ENCODE measurements at regions of chr22 and their contacts with region 1.

Region 1: GRCh38 chr22:32528984-32529982 is 54.7 kb downstream of the FBXO7 start:
- DNase-seq: peak; percentile 86
- ATAC-seq: peak; percentile 79
- H3K4me3 Mint-ChIP-seq: no peak overlapping the region
- H3K27ac Mint-ChIP-seq: no peak overlapping the region
- H3K4me1 Mint-ChIP-seq: no peaks in the 10 kb centered on the region
- H3K27me3 Mint-ChIP-seq: no peaks in the 10 kb centered on the region
- CTCF ChIP-seq: peak; percentile 63

Region 2: GRCh38 chr22:32518848-32519247 is 10.4 kb before region 1 on chr22:
- CTCF ChIA-PET with region 1: interaction called, 23 read pairs
- POLR2A ChIA-PET with region 1: no interaction called
- intact Hi-C with region 1: no loop called
- DNase-seq: peak; percentile 11
- ATAC-seq: no peak
- H3K4me3 Mint-ChIP-seq: no peak overlapping the region
- H3K27ac Mint-ChIP-seq: no peak overlapping the region
- H3K4me1 Mint-ChIP-seq: no peaks in the 10 kb centered on the region
- H3K27me3 Mint-ChIP-seq: no peaks in the 10 kb centered on the region
- CTCF ChIP-seq: peak; percentile 21

Region 3: DNA sequence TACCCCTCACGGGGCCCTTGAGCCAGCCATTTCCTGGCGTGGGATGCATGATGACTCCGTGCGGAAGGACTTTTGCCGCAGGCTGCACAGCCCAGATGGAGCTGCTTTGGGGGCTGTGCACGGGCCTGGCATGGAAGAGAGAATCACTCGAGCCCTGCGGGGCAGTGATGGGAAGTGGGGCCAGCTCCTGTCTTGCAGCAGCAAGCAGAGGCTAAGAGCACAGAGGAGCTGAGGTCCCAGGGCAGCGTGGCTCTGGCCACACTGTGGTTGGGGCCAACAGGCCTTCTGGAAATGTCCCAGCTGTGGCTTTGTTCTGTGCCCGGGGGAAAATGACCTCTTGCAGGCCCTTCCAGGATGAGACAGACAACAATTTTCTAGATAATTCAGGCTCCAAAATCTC is 179.5 kb after region 1 on chr22:
- CTCF ChIA-PET with region 1: no interaction called
- POLR2A ChIA-PET with region 1: no interaction called
- intact Hi-C with region 1: no loop called
- DNase-seq: no peak
- ATAC-seq: no peak
- H3K4me3 Mint-ChIP-seq: no peak overlapping the region
- H3K27ac Mint-ChIP-seq: no peak overlapping the region
- H3K4me1 Mint-ChIP-seq: no peaks in the 10 kb centered on the region
- H3K27me3 Mint-ChIP-seq: no peaks in the 10 kb centered on the region
- CTCF ChIP-seq: no peak

Region 4: DNA sequence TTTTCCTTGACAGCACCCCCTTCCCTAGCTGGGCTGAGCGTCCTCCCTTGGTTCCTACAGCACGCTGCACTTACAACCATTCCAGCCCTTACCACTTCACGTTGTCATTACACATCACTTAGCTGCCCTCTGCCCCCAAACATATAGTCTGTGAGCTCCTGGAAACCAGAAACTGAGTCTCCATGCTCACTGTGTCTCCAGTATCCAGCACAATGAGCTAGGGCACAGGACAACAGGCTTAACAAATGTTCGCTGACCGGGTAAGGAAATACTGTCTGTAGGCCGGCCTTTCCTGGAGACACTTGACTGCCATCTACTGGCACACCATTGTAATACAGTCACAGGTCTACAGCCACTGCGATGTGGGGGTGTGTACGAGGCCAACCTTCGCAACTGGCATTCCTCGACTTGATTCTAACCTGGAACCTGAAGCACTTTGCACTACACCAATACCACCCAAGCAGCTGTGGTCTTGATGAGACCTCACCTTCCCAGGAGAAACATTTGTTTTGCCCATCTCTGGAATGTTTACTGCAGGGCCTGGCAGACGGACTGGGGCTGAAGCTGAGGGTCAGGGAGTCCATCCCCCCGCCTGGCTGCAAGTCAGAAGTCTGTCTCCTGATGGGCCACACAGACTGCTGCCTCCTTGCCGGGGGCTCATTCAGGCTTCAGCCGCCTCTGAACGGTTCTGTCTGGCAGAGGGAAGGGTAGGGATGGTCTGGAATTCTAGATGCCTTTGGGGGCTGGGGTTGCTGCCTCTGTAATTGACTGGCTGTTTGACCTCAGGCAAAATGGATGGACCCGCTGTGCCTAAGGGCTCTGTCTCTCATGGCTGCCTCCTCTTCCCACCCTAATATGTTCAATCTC is 456.8 kb after region 1 on chr22:
- CTCF ChIA-PET with region 1: interaction called, 4 read pairs
- POLR2A ChIA-PET with region 1: no interaction called
- intact Hi-C with region 1: loop called (anchors 10 kb)
- DNase-seq: peak; percentile 63
- ATAC-seq: peak; percentile 71
- H3K4me3 Mint-ChIP-seq: no peak overlapping the region
- H3K27ac Mint-ChIP-seq: no peak overlapping the region
- H3K4me1 Mint-ChIP-seq: no peaks in the 10 kb centered on the region
- H3K27me3 Mint-ChIP-seq: peaks cover 4% of the 10 kb centered on the region
- CTCF ChIP-seq: peak; percentile 76

Measured in activated CD8-positive, alpha-beta T cell treated with anti-CD3 and anti-CD28 coated beads for 36 hours (primary cell).